K562 (cell line): ENCODE measurements at regions of chr3 and their contacts with region 1.

Region 1: DNA sequence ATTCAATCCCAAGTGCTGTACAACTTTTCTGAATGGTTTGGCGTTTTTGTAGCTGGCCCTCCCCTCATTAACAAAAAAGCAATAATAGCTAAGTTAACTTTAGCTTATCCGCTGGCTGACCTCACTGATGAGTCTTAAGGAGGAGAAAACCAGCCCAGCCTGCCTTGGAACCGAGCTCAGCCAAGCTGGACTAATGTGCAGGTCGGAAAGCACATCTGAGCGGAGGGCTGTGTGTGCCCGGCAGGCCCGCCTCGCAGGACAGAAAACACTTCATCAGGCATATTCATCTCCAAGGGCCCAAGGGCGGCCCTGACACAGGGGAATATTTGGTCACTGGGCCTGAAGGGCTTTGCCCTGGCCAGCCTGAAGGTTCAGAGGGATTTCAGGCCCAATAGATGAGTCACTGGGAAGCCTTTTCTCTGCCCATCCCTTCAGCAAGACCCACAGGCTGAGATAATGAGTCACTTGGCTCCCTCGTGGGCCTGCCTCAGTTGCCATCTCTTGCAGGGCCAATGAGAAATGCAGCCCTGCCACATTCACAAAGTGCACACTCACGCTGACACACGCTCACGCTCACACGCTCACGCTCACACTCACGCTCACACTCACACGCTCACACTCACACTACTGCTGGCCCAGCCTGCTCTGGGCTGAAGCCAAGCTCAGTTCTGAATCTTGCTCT is 75.1 kb downstream of the SLC12A8 start:
- DNase-seq: no peak
- ATAC-seq: no peak
- H3K4me3 ChIP-seq: no peak overlapping the region
- H3K27ac ChIP-seq: no peak overlapping the region
- H3K4me1 ChIP-seq: peaks cover 0 to 6% of the 10 kb centered on the region in 2 experiments; a peak in 1 of 5 replicates
- H3K27me3 ChIP-seq: peaks cover 11 to 41% of the 10 kb centered on the region in 2 experiments; a peak in 4 of 5 replicates
- CTCF ChIP-seq: no peak
- EP300 ChIP-seq: no peak
- POLR2A ChIP-seq: no peak
- RAD21 ChIP-seq: no peak

Region 2: GRCh38 chr3:124722589-124722988 is 414.9 kb before region 1 on chr3:
- CTCF ChIA-PET with region 1: no interaction called
- POLR2A ChIA-PET with region 1: no interaction called
- in situ Hi-C with region 1: no loop called
- intact Hi-C with region 1: no loop called
- DNase-seq: no peak
- ATAC-seq: no peak
- H3K4me3 ChIP-seq: no peak overlapping the region
- H3K27ac ChIP-seq: no peak overlapping the region
- H3K4me1 ChIP-seq: no peaks in the 10 kb centered on the region
- H3K27me3 ChIP-seq: peaks cover 0 to 16% of the 10 kb centered on the region in 2 experiments
- CTCF ChIP-seq: no peak
- EP300 ChIP-seq: no peak
- POLR2A ChIP-seq: no peak
- RAD21 ChIP-seq: no peak

Region 3: DNA sequence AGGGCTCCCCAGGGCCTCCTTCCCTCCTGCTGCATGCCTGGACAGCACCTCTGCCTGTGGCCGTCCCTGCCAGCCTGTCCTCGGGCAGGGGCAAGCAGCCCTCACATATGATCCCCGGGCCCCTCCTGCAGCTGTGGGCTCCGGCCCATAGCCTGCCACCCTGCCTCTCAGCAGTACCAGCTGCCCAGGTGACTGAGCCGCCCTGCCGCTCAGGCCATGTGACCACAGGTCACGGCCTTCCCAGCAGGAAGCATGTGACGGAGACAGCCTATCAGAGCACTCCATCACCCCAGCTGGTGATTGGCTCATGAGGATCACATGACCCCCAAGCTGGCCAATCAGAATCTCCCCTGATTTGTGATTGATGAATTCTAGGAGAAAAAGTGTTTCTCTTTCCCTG is 1019.0 kb after region 1 on chr3:
- CTCF ChIA-PET with region 1: no interaction called
- POLR2A ChIA-PET with region 1: no interaction called
- in situ Hi-C with region 1: loop called (anchors 10 kb)
- intact Hi-C with region 1: no loop called
- DNase-seq: peak; percentile 27 to 94 (median 90)
- ATAC-seq: peak; percentile 86
- H3K4me3 ChIP-seq: no peak overlapping the region
- H3K27ac ChIP-seq: no peak overlapping the region
- H3K4me1 ChIP-seq: peaks cover 0 to 5% of the 10 kb centered on the region in 2 experiments; a peak in 2 of 5 replicates
- H3K27me3 ChIP-seq: no peaks in the 10 kb centered on the region; a peak in 2 of 5 replicates
- CTCF ChIP-seq: no peak
- EP300 ChIP-seq: no peak
- POLR2A ChIP-seq: no peak
- RAD21 ChIP-seq: no peak